ENCODE measurements at regions of chr4 and their contacts with region 1.

Region 1: GRCh38 chr4:70839589-70840093 is at the start of gene GRSF1:
- DNase-seq: peak; percentile 97
- ATAC-seq: peak; percentile 92
- H3K4me3 Mint-ChIP-seq: peak within 1 kb of the TSS; percentile 95
- H3K27ac Mint-ChIP-seq: peak within 1 kb of the TSS; percentile 96
- H3K4me1 Mint-ChIP-seq: peaks cover 37% of the 10 kb centered on the region
- H3K27me3 Mint-ChIP-seq: no peaks in the 10 kb centered on the region
- total RNA-seq, gene GRSF1: 59.3 to 80.7 TPM

Region 2: DNA sequence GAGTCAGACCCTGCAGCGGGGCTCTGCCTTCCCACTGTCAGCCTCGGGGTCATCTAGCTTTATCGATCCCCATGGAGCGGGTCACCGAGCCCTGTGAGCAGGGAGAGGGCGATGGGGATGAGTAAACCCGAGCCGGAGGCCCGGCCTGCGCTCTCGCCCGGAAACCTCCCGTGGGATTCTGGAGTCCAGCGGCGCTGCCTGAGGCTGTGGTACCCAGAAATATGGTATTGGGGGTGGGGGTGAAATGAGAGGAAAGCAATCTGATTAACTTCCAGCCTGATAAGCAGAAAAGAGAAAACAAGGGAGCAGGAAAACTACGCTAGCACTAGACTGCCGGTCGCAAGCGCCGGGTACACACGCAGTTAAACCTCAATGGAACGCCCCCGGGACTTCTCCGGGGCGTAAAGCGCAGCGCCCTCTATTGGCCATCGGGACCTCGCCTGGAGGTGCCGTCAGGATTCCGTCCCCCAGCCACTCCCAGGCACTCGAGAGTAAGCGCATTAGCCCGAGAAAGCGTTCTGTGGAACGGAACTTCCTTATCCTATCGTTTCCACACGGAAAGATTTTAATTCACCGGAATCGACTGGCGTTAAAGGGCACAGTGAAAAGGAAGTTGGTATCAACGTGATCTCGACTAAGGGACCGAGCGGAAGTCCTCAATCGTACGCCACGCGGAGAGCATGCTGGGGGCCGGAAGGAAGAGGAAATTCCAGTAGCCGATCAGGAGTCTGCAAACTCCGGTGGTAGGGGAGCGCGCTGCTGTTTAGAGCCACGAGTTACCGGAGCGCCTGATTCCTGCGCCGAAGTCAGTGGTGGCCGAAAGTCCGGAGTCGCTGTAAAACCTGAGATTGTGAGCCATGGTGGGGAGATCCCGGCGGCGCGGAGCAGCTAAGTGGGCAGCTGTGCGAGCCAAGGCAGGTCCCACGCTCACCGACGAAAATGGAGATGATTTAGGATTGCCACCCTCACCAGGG is 151.5 kb before region 1 on chr4 and contains the start of gene UTP3:
- CTCF ChIA-PET with region 1: interaction called, 11 read pairs
- DNase-seq: peak; percentile 93
- ATAC-seq: peak; percentile 93
- H3K4me3 Mint-ChIP-seq: peak within 1 kb of the TSS; percentile 99
- H3K27ac Mint-ChIP-seq: peak within 1 kb of the TSS; percentile 95
- H3K4me1 Mint-ChIP-seq: peaks cover 30% of the 10 kb centered on the region
- H3K27me3 Mint-ChIP-seq: no peaks in the 10 kb centered on the region
- total RNA-seq, gene UTP3: 28.0 to 33.6 TPM

Region 3: DNA sequence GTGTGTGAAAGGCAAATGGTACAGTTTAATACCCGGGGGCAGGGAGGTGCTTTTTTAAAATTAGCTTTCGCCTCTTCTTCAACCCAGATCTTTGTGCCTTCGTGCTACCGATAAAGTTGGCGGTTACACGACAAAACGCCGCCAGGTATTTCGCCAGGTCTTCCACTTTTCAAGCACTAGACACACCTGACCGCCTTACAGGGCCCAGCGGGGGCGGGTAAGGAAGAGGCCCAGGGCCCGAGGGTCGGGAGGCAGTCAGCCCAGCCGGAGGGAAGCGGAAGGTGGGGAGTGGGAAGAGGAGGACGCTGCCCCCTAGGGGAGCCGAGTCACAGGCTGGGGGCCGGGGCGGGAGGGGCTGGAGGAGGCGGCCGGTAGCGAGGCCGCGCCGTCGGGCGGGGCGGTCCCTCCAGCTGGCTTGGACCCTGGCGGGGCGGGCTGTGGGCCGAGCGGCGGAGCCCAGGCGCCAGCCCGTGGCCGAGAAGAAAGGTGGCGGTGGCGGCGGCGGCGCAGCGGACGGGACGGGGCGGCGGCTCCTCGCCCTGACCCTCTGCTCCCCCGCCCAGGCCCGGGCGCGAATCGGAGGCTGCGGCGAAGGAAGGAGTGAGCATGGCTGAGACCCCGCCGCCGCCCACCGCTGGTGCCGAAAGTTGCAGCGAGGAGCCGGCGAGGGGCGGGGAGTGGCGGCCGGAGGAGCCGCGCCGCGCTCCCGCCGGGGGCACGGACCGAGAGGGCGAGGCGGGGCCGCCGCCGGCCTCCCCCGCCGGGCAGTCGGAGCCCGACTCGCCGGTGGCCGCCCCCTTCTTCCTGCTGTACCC is 135.1 kb before region 1 on chr4:
- CTCF ChIA-PET with region 1: interaction called, 10 read pairs
- DNase-seq: peak; percentile 74
- ATAC-seq: peak; percentile 62
- H3K4me3 Mint-ChIP-seq: peak overlapping the region; percentile 77
- H3K27ac Mint-ChIP-seq: peak overlapping the region; percentile 71
- H3K4me1 Mint-ChIP-seq: peaks cover 20% of the 10 kb centered on the region
- H3K27me3 Mint-ChIP-seq: no peaks in the 10 kb centered on the region

Region 4: GRCh38 chr4:70993181-70994068 is 153.8 kb after region 1 on chr4 and contains the start of gene DCK:
- CTCF ChIA-PET with region 1: interaction called, 14 read pairs
- DNase-seq: peak; percentile 89
- ATAC-seq: peak; percentile 94
- H3K4me3 Mint-ChIP-seq: peak within 1 kb of the TSS; percentile 92
- H3K27ac Mint-ChIP-seq: peak within 1 kb of the TSS; percentile 81
- H3K4me1 Mint-ChIP-seq: peaks cover 37% of the 10 kb centered on the region
- H3K27me3 Mint-ChIP-seq: no peaks in the 10 kb centered on the region
- total RNA-seq, gene DCK: 60.0 to 70.7 TPM

Region 5: GRCh38 chr4:71045256-71045655 is 205.6 kb after region 1 on chr4:
- CTCF ChIA-PET with region 1: no interaction called
- DNase-seq: no peak
- ATAC-seq: no peak
- H3K4me3 Mint-ChIP-seq: no peak overlapping the region
- H3K27ac Mint-ChIP-seq: no peak overlapping the region
- H3K4me1 Mint-ChIP-seq: no peaks in the 10 kb centered on the region
- H3K27me3 Mint-ChIP-seq: no peaks in the 10 kb centered on the region

Measured in activated CD8-positive, alpha-beta memory T cell treated with anti-CD3 and anti-CD28 coated beads, Interleukin-2, amount 10 ng/mL, durations not matched to agents 7 days and 5 days (primary cell).